ENCODE measurements at regions of chr10 and their contacts with region 1.

Region 1: DNA sequence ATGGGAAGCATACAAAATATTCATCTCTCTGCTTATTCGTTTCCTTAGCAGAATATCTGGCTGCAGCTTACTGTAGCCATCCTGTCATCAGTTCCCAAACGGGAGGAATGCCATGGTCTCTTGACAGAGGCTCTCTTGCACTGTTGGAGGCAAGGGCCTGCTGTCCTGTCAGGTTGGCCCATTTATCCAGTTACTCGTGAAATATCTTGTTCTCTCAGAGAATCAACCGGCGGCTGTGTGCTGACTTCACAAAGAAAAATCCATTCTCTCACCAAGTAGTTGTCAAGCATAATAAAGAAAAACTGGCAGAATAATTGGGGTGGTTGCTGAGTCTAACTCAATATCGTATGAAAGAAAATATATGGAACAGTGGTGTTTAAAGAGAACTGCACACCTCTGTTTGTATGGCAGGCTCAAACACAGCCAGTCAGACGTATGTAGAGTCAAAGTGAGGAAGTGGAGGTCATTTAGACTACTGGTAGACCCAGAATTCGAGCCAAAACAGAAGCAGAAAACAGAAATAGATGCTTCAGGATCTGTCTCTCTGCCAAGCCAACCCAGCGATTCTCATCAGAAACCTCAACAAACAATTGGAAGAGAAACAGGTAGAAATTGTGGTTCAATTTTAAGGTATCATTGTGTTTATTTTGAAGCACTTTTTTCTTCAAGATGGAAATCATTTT is 349.2 kb upstream of the PRKCQ start:
- DNase-seq: peak in 1 of 2 donors; percentile 45
- ATAC-seq: no peak
- H3K4me3 ChIP-seq: no peak overlapping the region
- H3K4me3 Mint-ChIP-seq: peak overlapping the region; percentile 87
- H3K27ac ChIP-seq: peak overlapping the region; percentile 91
- H3K27ac Mint-ChIP-seq: peak overlapping the region; percentile 96 to 98
- H3K4me1 ChIP-seq: peaks cover 37% of the 10 kb centered on the region
- H3K4me1 Mint-ChIP-seq: peaks cover 54 to 64% of the 10 kb centered on the region in 2 donors
- H3K27me3 ChIP-seq: no peaks in the 10 kb centered on the region
- H3K27me3 Mint-ChIP-seq: no peaks in the 10 kb centered on the region
- CTCF ChIP-seq: no peak

Region 2: GRCh38 chr10:6894405-6894804 is 34.9 kb before region 1 on chr10:
- intact Hi-C with region 1: no loop called
- DNase-seq: no peak
- ATAC-seq: peak in 1 of 3 donors; percentile 52
- H3K4me3 ChIP-seq: no peak overlapping the region
- H3K4me3 Mint-ChIP-seq: no peak overlapping the region
- H3K27ac ChIP-seq: no peak overlapping the region
- H3K27ac Mint-ChIP-seq: no peak overlapping the region
- H3K4me1 ChIP-seq: no peaks in the 10 kb centered on the region
- H3K4me1 Mint-ChIP-seq: no peaks in the 10 kb centered on the region
- H3K27me3 ChIP-seq: no peaks in the 10 kb centered on the region
- H3K27me3 Mint-ChIP-seq: no peaks in the 10 kb centered on the region
- CTCF ChIP-seq: no peak

Region 3: DNA sequence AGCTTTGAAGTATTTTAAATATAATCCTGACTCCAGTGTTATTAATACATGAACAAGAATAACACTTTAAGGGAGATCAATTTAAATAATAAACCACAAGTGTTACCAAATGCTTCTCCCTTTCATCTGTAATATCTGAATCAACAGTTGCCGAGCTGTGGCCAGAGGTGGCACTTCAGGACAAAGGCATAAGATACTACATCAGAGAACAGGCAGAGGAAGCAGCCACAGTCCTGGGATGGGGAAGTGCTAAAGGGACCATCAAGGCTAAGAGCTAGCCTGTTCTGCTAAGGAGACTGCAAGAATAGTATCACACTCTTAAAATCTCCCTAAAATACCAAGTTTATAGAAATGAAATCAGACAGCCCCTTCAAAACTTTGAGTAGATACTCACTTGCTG is 29.0 kb after region 1 on chr10:
- intact Hi-C with region 1: loop called (anchors 1 kb)
- DNase-seq: peak; percentile 19 to 41
- ATAC-seq: peak; percentile 68 to 78 (median 70)
- H3K4me3 ChIP-seq: no peak overlapping the region
- H3K4me3 Mint-ChIP-seq: peak overlapping the region; percentile 72
- H3K27ac ChIP-seq: peak overlapping the region; percentile 15
- H3K27ac Mint-ChIP-seq: peak overlapping the region; percentile 79 to 86
- H3K4me1 ChIP-seq: peaks cover 24% of the 10 kb centered on the region
- H3K4me1 Mint-ChIP-seq: peaks cover 49 to 51% of the 10 kb centered on the region in 2 donors
- H3K27me3 ChIP-seq: no peaks in the 10 kb centered on the region
- H3K27me3 Mint-ChIP-seq: peaks cover 0 to 4% of the 10 kb centered on the region in 2 donors
- CTCF ChIP-seq: no peak

Region 4: GRCh38 chr10:6995831-6996230 is 66.5 kb after region 1 on chr10:
- intact Hi-C with region 1: loop called (anchors 2 kb)
- DNase-seq: no peak
- ATAC-seq: no peak
- H3K4me3 ChIP-seq: no peak overlapping the region
- H3K4me3 Mint-ChIP-seq: no peak overlapping the region
- H3K27ac ChIP-seq: no peak overlapping the region
- H3K27ac Mint-ChIP-seq: no peak overlapping the region
- H3K4me1 ChIP-seq: peaks cover 35% of the 10 kb centered on the region
- H3K4me1 Mint-ChIP-seq: peaks cover 44 to 48% of the 10 kb centered on the region in 2 donors
- H3K27me3 ChIP-seq: no peaks in the 10 kb centered on the region
- H3K27me3 Mint-ChIP-seq: no peaks in the 10 kb centered on the region
- CTCF ChIP-seq: no peak

Region 5: DNA sequence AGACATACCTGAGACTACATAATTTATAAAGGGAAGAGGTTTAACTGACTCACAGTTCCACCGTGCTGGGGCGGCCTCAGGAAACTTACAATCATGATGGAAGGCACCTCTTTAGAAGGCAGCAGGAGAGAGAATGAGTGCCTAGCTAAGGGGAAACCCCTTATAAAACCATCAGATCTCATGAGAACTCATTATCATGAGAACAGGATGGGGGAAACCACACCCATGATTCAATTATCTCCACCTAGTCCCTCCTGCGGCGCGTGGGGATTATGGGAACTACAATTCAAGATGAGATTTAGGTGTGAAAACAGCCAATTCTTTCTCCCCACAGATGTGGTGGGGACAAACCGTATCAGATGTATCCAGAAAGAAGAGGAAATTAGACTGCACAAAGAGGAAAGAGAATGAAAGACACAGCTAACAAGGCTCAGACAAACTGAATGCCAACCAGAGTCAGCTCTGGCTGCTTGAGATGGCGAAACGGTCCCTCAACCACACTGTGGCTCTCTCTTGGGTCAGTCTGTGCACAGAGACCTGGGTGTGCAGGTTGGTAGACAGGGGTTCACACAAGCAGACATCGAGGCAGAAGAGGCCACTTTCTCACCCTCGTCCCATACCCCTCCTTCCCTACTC is 106.0 kb after region 1 on chr10:
- intact Hi-C with region 1: loop called (anchors 1 kb)
- DNase-seq: peak; percentile 32 to 34
- ATAC-seq: peak; percentile 51 to 60 (median 53)
- H3K4me3 ChIP-seq: no peak overlapping the region
- H3K4me3 Mint-ChIP-seq: peak overlapping the region; percentile 84
- H3K27ac ChIP-seq: peak overlapping the region; percentile 50
- H3K27ac Mint-ChIP-seq: peak overlapping the region; percentile 93
- H3K4me1 ChIP-seq: peaks cover 38% of the 10 kb centered on the region
- H3K4me1 Mint-ChIP-seq: peaks cover 93 to 94% of the 10 kb centered on the region in 2 donors
- H3K27me3 ChIP-seq: no peaks in the 10 kb centered on the region
- H3K27me3 Mint-ChIP-seq: no peaks in the 10 kb centered on the region
- CTCF ChIP-seq: no peak

Region 6: DNA sequence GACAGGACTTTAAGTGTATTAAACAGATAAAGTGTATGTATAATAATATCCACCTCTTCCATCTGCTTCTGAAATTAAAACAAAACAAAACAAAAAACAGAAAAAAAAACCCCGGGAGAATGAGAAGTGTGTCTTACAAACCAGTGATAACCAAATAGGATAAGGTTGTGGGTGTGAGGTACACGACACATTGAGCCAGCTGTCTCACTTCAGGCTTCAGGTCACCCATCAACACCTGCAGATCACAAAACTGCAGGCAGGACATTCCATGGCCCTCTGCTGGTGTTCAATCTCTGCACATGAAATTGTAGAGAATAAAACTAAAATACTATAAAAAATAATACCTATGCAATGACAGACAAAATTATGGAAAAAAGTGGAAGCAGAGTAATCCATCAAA is 141.7 kb after region 1 on chr10:
- intact Hi-C with region 1: loop called (anchors 2 kb)
- DNase-seq: peak in 1 of 2 donors; percentile 36
- ATAC-seq: peak in 2 of 3 donors; percentile 52 to 60
- H3K4me3 ChIP-seq: no peak overlapping the region
- H3K4me3 Mint-ChIP-seq: no peak overlapping the region
- H3K27ac ChIP-seq: no peak overlapping the region
- H3K27ac Mint-ChIP-seq: no peak overlapping the region
- H3K4me1 ChIP-seq: peaks cover 10% of the 10 kb centered on the region
- H3K4me1 Mint-ChIP-seq: peaks cover 10 to 17% of the 10 kb centered on the region in 2 donors
- H3K27me3 ChIP-seq: no peaks in the 10 kb centered on the region
- H3K27me3 Mint-ChIP-seq: no peaks in the 10 kb centered on the region
- CTCF ChIP-seq: peak; percentile 30

Region 7: DNA sequence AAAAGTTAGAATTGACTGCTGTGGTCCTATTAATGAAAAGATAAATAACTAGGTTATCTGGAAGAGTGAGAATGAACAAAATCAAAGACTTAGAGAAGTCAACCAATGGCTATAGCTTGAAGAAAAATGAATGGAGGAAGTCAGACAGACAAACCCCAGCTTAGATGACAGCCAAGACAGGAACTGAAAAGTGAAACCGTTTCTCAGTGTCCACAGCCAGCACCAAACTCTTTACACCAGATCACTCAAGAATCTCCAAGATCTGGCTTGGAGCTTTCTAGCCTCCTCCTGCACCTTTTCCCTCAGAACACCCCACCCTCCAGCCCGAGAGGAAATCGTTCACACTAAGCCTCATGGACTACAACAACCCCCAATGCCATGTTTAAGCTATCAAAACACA is 314.6 kb after region 1 on chr10:
- intact Hi-C with region 1: loop called (anchors 1 kb)
- DNase-seq: peak; percentile 25 to 30
- ATAC-seq: peak; percentile 58 to 81 (median 60)
- H3K4me3 ChIP-seq: no peak overlapping the region
- H3K4me3 Mint-ChIP-seq: peak overlapping the region; percentile 92
- H3K27ac ChIP-seq: peak overlapping the region; percentile 71
- H3K27ac Mint-ChIP-seq: peak overlapping the region; percentile 90 to 99
- H3K4me1 ChIP-seq: peaks cover 30% of the 10 kb centered on the region
- H3K4me1 Mint-ChIP-seq: peaks cover 62 to 66% of the 10 kb centered on the region in 2 donors
- H3K27me3 ChIP-seq: no peaks in the 10 kb centered on the region
- H3K27me3 Mint-ChIP-seq: no peaks in the 10 kb centered on the region
- CTCF ChIP-seq: no peak